Heart left ventricle (tissue), 16 donors: ENCODE measurements at regions of chr2 and their contacts with region 1.

Region 1: DNA sequence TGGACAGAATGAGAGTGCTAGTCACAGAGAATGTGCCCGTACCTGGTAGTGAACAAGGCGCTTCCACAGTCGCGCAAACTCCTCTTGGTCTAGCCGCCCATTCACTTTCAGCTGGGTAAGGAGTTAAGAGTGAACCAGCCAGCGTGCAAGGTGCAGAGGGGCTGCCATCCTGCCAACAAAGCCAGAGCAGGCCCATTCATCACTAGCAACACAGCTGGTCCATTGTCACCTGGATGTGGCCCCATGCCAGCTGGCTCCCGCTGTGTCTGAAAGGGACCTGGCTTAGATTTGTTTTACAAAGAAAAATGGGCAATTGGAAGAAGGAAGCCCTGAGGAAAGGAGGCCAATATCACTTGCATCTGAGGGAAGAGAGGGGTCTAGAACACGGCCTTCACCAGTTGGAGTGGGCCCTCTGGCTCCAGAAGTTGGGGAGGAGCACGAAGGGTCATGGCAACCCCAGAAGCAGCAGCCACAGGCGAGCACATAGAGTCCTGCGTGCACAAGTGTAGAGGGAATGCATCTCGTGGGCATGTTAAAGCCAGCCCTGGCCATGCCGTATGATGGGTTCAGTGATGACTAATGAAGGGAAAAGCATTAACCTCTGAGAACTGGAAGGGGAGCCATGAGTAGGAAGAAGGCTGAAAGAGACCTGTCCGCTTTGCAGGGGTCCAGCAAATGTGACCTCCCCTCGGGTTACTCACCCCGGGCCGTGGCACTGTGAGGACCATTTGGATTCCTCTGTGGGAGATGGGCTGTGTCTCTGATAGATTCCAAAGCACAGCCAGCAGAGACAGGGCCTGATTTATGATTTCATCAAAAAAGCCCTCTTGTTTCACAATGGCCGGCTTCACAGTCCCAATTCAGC is 70.6 kb downstream of the CAPN13 start:
- DNase-seq: no peak
- ATAC-seq: no peak
- H3K4me3 ChIP-seq: no peak overlapping the region
- H3K27ac ChIP-seq: no peak overlapping the region
- H3K4me1 ChIP-seq: no peaks in the 10 kb centered on the region
- H3K27me3 ChIP-seq: peaks cover 0 to 13% (median 0%) of the 10 kb centered on the region in 9 donors
- CTCF ChIP-seq: no peak
- POLR2A ChIP-seq: no peak

Region 2: GRCh38 chr2:30846971-30847729 is 110.5 kb after region 1 on chr2:
- intact Hi-C with region 1: loop called in 1 of 10 experiments (anchors 10 kb)
- DNase-seq: no peak
- ATAC-seq: no peak
- H3K4me3 ChIP-seq: no peak overlapping the region
- H3K27ac ChIP-seq: no peak overlapping the region
- H3K4me1 ChIP-seq: no peaks in the 10 kb centered on the region
- H3K27me3 ChIP-seq: peaks cover 0 to 3% (median 0%) of the 10 kb centered on the region in 9 donors
- CTCF ChIP-seq: no peak
- POLR2A ChIP-seq: no peak